ENCODE measurements at regions of chr3 and their contacts with region 1.

Region 1: GRCh38 chr3:109803274-109803673 is 465.9 kb upstream of the DPPA4 start:
- DNase-seq: no peak
- H3K4me3 ChIP-seq: no peak overlapping the region
- H3K27ac ChIP-seq: no peak overlapping the region
- H3K4me1 ChIP-seq: peaks cover 0 to 2% (median 0%) of the 10 kb centered on the region in 4 experiments; a peak in 1 of 7 replicates
- H3K27me3 ChIP-seq: no peaks in the 10 kb centered on the region
- CTCF ChIP-seq: peak in 2 of 3 experiments; percentile 33 to 54; a peak in 2 of 4 replicates
- EP300 ChIP-seq: no peak
- POLR2A ChIP-seq: no peak
- RAD21 ChIP-seq: peak; percentile 40 to 43

Region 2: DNA sequence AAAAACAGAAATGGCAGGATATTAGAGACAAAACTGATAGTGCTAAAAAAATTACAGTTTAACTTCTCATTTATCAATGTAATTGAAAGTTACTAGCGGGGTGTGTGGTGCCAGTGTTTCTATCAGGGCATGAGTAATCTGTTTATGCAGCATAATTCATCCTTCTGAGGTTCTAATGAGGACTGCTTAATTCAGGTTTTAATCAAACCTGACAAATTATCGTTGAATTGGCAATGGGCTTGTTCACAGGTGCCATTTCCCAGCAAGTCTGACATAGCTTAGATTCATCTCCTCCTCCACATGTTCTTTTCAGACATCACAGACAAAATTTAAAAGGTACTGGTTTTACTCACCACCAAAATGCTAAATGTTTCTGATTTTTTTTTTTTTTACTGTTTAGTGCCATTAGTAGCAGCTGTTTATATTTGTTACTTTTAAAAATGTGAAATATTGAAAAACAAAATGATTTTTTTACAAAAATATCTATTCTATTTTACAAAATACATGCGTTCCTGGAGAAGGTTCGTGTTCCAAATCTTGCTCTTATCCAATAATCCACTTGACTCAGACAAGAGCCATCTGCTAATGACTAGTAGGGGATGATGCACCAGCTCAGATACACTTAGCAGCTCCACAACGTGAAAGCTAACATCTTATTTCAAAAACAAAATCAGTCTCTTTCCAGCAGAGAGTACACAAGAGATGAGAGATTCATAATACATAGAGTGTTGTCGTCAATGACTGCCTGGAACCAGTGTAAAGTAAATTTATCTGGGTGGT is 18.2 kb before region 1 on chr3:
- CTCF ChIA-PET with region 1: interaction called, 49 read pairs
- POLR2A ChIA-PET with region 1: no interaction called
- DNase-seq: no peak
- H3K4me3 ChIP-seq: no peak overlapping the region
- H3K27ac ChIP-seq: no peak overlapping the region
- H3K4me1 ChIP-seq: no peaks in the 10 kb centered on the region
- H3K27me3 ChIP-seq: no peaks in the 10 kb centered on the region
- CTCF ChIP-seq: no peak
- EP300 ChIP-seq: no peak
- POLR2A ChIP-seq: no peak
- RAD21 ChIP-seq: no peak

Region 3: GRCh38 chr3:109819734-109820133 is 16.5 kb after region 1 on chr3:
- CTCF ChIA-PET with region 1: interaction called, 23 read pairs
- POLR2A ChIA-PET with region 1: no interaction called
- DNase-seq: no peak
- H3K4me3 ChIP-seq: no peak overlapping the region
- H3K27ac ChIP-seq: no peak overlapping the region
- H3K4me1 ChIP-seq: peaks cover 0 to 3% (median 2%) of the 10 kb centered on the region in 4 experiments; a peak in 4 of 7 replicates
- H3K27me3 ChIP-seq: no peaks in the 10 kb centered on the region
- CTCF ChIP-seq: no peak
- EP300 ChIP-seq: no peak
- POLR2A ChIP-seq: no peak
- RAD21 ChIP-seq: no peak